ENCODE measurements at regions of chr20 and their contacts with region 1.

Region 1: GRCh38 chr20:30376767-30377666 is 880.4 kb upstream of the DEFB115 start:
- DNase-seq: peak; percentile 82 to 91 (median 84)
- ATAC-seq: peak; percentile 99
- H3K4me3 ChIP-seq: peak overlapping the region; percentile 81
- H3K27ac ChIP-seq: peak overlapping the region; percentile 80; the same call in 2 of the 3 replicates
- H3K4me1 ChIP-seq: peaks cover 0 to 5% of the 10 kb centered on the region in 2 experiments; a peak in 2 of 5 replicates
- H3K27me3 ChIP-seq: no peaks in the 10 kb centered on the region
- CTCF ChIP-seq: peak; percentile 66 to 80 (median 68); a peak in 5 of 6 replicates
- EP300 ChIP-seq: peak; percentile 15; the same call in 1 of the 2 replicates
- POLR2A ChIP-seq: peak; percentile 78
- RAD21 ChIP-seq: 0 out of 4 replicates have a peak, but pooled peaks of 1 of the 2 experiments have one; percentile 21

Region 2: DNA sequence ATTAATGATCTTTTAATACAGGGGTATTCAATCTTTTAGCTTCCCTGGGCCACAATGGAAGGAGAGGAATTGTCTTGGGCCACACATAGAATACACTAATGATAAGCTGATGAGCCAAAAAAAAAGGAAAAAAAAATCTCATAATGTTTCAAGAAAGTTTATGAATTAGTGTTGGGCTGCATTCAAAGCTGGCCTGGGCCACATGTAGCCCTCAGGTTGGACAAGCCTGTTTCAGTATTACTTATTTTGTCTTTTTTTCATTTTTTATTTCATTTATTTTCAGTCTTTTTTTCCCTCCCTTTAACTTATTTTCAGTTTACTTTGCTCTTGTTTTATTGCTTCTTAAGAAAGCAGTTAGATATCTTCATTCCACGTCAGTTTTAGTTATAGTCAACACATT is 1291.4 kb before region 1 on chr20:
- CTCF ChIA-PET with region 1: no interaction called
- POLR2A ChIA-PET with region 1: no interaction called
- in situ Hi-C with region 1: loop called (anchors 5 kb)
- intact Hi-C with region 1: no loop called
- DNase-seq: peak in 1 of 4 experiments; percentile 11
- ATAC-seq: no peak
- H3K4me3 ChIP-seq: no peak overlapping the region
- H3K27ac ChIP-seq: peak overlapping the region; percentile 0; the same call in 1 of the 3 replicates
- H3K4me1 ChIP-seq: peaks cover 3 to 5% of the 10 kb centered on the region in 2 experiments; a peak in 3 of 5 replicates
- H3K27me3 ChIP-seq: no peaks in the 10 kb centered on the region
- CTCF ChIP-seq: no peak
- EP300 ChIP-seq: no peak
- POLR2A ChIP-seq: no peak
- RAD21 ChIP-seq: no peak

Region 3: DNA sequence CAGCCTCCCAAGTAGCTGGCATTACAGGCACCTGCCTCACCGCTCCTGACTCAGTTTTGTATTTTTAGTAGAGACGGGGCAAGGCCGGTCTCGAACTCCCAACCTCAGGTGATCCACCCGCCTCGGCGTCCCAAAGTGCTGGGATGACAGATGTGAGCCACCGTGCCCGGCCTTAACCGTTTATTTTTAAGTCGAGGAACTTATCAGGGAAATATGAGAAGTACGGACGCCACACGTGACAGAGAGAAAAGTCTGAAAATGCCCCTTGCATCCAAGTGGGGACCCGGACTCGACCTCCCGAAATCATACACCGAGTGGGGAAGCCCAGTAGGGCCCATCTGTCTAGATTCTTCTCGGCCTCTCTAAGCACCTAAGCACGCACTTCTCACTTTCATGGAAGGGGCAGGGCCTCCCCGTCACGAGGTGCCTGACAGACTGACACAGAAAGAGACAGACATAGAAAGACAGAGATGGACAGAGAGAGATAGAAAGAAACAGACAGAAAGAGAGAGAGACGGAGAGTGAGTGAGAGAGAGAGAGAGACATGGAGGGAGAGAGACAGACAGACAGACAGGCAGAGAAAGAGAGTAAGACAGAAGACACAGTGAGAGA is 123.9 kb after region 1 on chr20:
- CTCF ChIA-PET with region 1: no interaction called
- POLR2A ChIA-PET with region 1: no interaction called
- in situ Hi-C with region 1: loop called (anchors 25 kb)
- intact Hi-C with region 1: no loop called
- DNase-seq: no peak
- ATAC-seq: peak; percentile 23; the same call in 1 of the 3 replicates
- H3K4me3 ChIP-seq: no peak overlapping the region
- H3K27ac ChIP-seq: no peak overlapping the region
- H3K4me1 ChIP-seq: no peaks in the 10 kb centered on the region; a peak in 1 of 5 replicates
- H3K27me3 ChIP-seq: no peaks in the 10 kb centered on the region; a peak in 1 of 5 replicates
- CTCF ChIP-seq: no peak; a peak in 1 of 6 replicates
- EP300 ChIP-seq: no peak
- POLR2A ChIP-seq: no peak
- RAD21 ChIP-seq: no peak

Region 4: GRCh38 chr20:30598460-30599230 is 221.6 kb after region 1 on chr20:
- CTCF ChIA-PET with region 1: no interaction called
- POLR2A ChIA-PET with region 1: no interaction called
- in situ Hi-C with region 1: no loop called
- intact Hi-C with region 1: no loop called
- DNase-seq: no peak
- ATAC-seq: no peak
- H3K4me3 ChIP-seq: no peak overlapping the region
- H3K27ac ChIP-seq: no peak overlapping the region
- H3K4me1 ChIP-seq: peaks cover 0 to 5% of the 10 kb centered on the region in 2 experiments; a peak in 2 of 5 replicates
- H3K27me3 ChIP-seq: no peaks in the 10 kb centered on the region; a peak in 1 of 5 replicates
- CTCF ChIP-seq: no peak
- EP300 ChIP-seq: no peak
- POLR2A ChIP-seq: no peak
- RAD21 ChIP-seq: no peak

Measured in K562 (cell line).